ENCODE measurements at regions of chr9 and their contacts with region 1.

Region 1: DNA sequence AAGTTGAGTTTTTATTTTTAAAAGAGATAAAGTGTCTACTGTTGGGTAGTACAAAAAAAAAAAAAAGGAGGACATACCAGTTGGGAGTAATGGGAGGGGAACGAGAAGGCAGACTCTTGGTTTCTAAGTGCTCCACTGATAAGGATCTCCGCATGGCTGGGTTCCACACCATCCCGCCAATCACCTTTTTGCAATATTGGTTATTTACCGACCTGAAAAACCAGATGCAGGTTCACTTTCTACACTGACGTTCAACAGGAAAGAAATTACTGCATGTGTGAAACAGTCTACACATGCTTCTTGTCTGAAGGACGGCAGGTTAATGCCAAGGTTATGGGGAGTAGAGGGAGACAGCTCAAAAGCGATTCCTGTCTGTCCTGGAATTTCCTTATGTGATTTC is 75.5 kb downstream of the PTPN3 start:
- DNase-seq: no peak
- ATAC-seq: no peak
- H3K4me3 ChIP-seq: no peak overlapping the region
- H3K27ac ChIP-seq: no peak overlapping the region
- H3K4me1 ChIP-seq: no peaks in the 10 kb centered on the region
- H3K27me3 ChIP-seq: no peaks in the 10 kb centered on the region

Region 2: DNA sequence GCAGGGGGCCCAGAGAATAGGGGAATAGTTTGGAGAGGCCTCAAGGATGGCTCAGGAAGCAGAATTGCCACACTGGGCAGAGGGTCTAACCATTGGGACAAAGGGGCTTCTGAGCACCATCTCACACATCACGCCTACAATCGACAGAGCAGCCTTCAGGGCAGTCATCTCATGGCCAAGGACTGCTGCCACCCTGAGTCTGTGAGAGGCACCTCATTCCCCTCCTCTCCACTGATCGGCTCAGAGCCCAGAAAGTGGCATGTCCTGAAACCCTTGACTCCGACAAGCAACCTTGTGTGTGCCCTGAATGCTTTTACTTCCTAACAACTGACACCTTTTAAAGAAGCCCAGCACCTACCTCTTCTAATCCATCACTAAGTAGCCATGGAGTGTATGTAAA is 204.4 kb after region 1 on chr9:
- intact Hi-C with region 1: loop called in 1 of 4 experiments (anchors 10 kb)
- DNase-seq: peak in 1 of 3 donors; percentile 34
- ATAC-seq: peak; percentile 54 to 79
- H3K4me3 ChIP-seq: no peak overlapping the region
- H3K27ac ChIP-seq: no peak overlapping the region
- H3K4me1 ChIP-seq: peaks cover 2% of the 10 kb centered on the region
- H3K27me3 ChIP-seq: no peaks in the 10 kb centered on the region